ENCODE measurements at regions of chr2 and their contacts with region 1.

Region 1: GRCh38 chr2:24075915-24076848 is at the start of gene SF3B6:
- DNase-seq: peak; percentile 100
- ATAC-seq: peak; percentile 85
- H3K4me3 ChIP-seq: peak within 1 kb of the TSS; percentile 83 to 99 (median 96)
- H3K4me3 Mint-ChIP-seq: peak within 1 kb of the TSS; percentile 98
- H3K27ac ChIP-seq: peak within 1 kb of the TSS; percentile 84 to 87
- H3K27ac Mint-ChIP-seq: peak within 1 kb of the TSS; percentile 99
- H3K4me1 ChIP-seq: peaks cover 15 to 18% of the 10 kb centered on the region in 2 donors
- H3K4me1 Mint-ChIP-seq: peaks cover 33% of the 10 kb centered on the region
- H3K27me3 ChIP-seq: no peaks in the 10 kb centered on the region
- H3K27me3 Mint-ChIP-seq: no peaks in the 10 kb centered on the region
- CTCF ChIP-seq: no peak
- total RNA-seq, gene SF3B6: 45.0 and 47.2 TPM in 2 replicates

Region 2: GRCh38 chr2:23384551-23385349 is 691.4 kb before region 1 on chr2 and contains the start of gene KLHL29:
- CTCF ChIA-PET with region 1: no interaction called
- POLR2A ChIA-PET with region 1: no interaction called
- intact Hi-C with region 1: loop called (anchors 10 kb)
- DNase-seq: peak; percentile 79
- ATAC-seq: peak; percentile 87
- H3K4me3 ChIP-seq: peak within 1 kb of the TSS in 4 of 5 experiments; percentile 37 to 63 (median 56)
- H3K4me3 Mint-ChIP-seq: peak within 1 kb of the TSS; percentile 92
- H3K27ac ChIP-seq: no peak within 1 kb of the TSS
- H3K27ac Mint-ChIP-seq: peak within 1 kb of the TSS; percentile 68
- H3K4me1 ChIP-seq: peaks cover 29 to 34% of the 10 kb centered on the region in 2 donors
- H3K4me1 Mint-ChIP-seq: peaks cover 30% of the 10 kb centered on the region
- H3K27me3 ChIP-seq: peaks cover 0 to 41% (median 24%) of the 10 kb centered on the region in 4 experiments
- H3K27me3 Mint-ChIP-seq: peaks cover 36% of the 10 kb centered on the region
- CTCF ChIP-seq: no peak
- total RNA-seq, gene KLHL29: 3.4 and 3.9 TPM in 2 replicates

Region 3: DNA sequence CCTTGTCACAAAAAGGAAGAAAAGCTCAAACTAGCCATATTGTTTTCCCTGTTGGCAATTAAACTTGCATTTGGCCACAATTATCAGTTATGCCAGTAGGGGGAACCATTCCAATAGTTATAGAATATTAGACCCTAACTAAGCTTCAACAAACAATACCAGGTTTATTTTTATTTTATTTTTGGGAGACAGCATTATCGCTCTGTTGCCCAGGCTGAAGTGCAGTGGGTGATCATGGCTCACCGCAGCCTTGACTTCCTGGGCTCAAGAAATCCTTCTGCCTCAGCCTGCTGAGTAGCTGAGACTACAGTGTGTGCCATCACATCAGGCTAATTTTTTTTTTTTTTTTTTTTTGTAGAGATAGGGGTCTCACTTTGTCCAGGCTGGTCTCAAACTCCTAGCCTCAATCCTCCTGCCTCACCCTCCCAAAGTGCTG is 251.4 kb before region 1 on chr2:
- CTCF ChIA-PET with region 1: interaction called, 154 read pairs
- POLR2A ChIA-PET with region 1: no interaction called
- intact Hi-C with region 1: no loop called
- DNase-seq: peak; percentile 76
- ATAC-seq: peak; percentile 41
- H3K4me3 ChIP-seq: no peak overlapping the region
- H3K4me3 Mint-ChIP-seq: no peak overlapping the region
- H3K27ac ChIP-seq: no peak overlapping the region
- H3K27ac Mint-ChIP-seq: no peak overlapping the region
- H3K4me1 ChIP-seq: no peaks in the 10 kb centered on the region
- H3K4me1 Mint-ChIP-seq: no peaks in the 10 kb centered on the region
- H3K27me3 ChIP-seq: no peaks in the 10 kb centered on the region
- H3K27me3 Mint-ChIP-seq: no peaks in the 10 kb centered on the region
- CTCF ChIP-seq: peak; percentile 91

Region 4: DNA sequence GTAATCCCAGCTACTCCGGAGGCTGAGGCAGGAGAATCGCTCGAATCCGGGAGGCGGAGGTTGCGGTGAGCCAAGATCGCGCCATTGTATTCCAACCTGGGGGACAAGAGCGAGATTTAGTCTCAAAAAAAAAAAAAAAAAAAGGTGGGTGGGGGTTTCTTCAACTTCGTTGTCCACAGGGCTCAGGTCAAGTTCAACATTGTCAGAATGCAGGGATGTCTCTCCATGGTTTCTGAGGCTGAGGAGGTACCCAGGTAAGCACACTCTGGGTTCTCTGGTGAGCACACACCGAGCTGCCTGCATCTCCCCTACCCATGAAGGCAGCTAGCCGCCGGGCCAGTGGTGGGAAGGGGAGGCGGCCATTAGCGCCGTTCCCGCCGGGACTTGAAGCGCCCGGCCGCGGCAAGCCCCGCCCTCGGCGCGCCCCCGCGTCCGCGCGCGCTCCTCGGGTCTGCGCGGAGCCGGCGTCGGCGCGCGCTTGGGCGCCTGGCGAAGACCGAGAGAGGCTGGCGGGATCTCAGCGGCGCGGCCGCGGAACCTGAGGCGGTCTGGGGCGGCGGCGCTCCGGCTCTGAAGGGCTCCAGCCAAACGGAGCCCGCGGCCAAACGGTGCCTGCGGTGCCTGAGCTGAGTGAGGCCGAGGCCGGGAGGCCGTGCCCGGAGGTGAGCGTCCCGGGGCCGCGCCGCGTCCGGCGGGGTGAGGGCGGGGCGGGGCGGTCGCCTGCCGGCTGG is 136.0 kb before region 1 on chr2 and contains the start of gene UBXN2A:
- CTCF ChIA-PET with region 1: no interaction called
- POLR2A ChIA-PET with region 1: interaction called, 5 read pairs
- intact Hi-C with region 1: loop called (anchors 1 kb)
- DNase-seq: peak; percentile 91
- ATAC-seq: peak; percentile 84
- H3K4me3 ChIP-seq: peak within 1 kb of the TSS; percentile 65 to 91 (median 80)
- H3K4me3 Mint-ChIP-seq: peak within 1 kb of the TSS; percentile 91
- H3K27ac ChIP-seq: peak within 1 kb of the TSS; percentile 36 to 72
- H3K27ac Mint-ChIP-seq: peak within 1 kb of the TSS; percentile 85
- H3K4me1 ChIP-seq: peaks cover 12 to 18% of the 10 kb centered on the region in 2 donors
- H3K4me1 Mint-ChIP-seq: peaks cover 21% of the 10 kb centered on the region
- H3K27me3 ChIP-seq: no peaks in the 10 kb centered on the region
- H3K27me3 Mint-ChIP-seq: no peaks in the 10 kb centered on the region
- CTCF ChIP-seq: no peak
- total RNA-seq, gene UBXN2A: 13.4 and 14.2 TPM in 2 replicates

Region 5: GRCh38 chr2:24040531-24040930 is 35.7 kb before region 1 on chr2:
- CTCF ChIA-PET with region 1: no interaction called
- POLR2A ChIA-PET with region 1: interaction called, 10 read pairs
- intact Hi-C with region 1: no loop called
- DNase-seq: no peak
- ATAC-seq: no peak
- H3K4me3 ChIP-seq: no peak overlapping the region
- H3K4me3 Mint-ChIP-seq: no peak overlapping the region
- H3K27ac ChIP-seq: no peak overlapping the region
- H3K27ac Mint-ChIP-seq: no peak overlapping the region
- H3K4me1 ChIP-seq: no peaks in the 10 kb centered on the region
- H3K4me1 Mint-ChIP-seq: peaks cover 10% of the 10 kb centered on the region
- H3K27me3 ChIP-seq: no peaks in the 10 kb centered on the region
- H3K27me3 Mint-ChIP-seq: no peaks in the 10 kb centered on the region
- CTCF ChIP-seq: no peak

Region 6: DNA sequence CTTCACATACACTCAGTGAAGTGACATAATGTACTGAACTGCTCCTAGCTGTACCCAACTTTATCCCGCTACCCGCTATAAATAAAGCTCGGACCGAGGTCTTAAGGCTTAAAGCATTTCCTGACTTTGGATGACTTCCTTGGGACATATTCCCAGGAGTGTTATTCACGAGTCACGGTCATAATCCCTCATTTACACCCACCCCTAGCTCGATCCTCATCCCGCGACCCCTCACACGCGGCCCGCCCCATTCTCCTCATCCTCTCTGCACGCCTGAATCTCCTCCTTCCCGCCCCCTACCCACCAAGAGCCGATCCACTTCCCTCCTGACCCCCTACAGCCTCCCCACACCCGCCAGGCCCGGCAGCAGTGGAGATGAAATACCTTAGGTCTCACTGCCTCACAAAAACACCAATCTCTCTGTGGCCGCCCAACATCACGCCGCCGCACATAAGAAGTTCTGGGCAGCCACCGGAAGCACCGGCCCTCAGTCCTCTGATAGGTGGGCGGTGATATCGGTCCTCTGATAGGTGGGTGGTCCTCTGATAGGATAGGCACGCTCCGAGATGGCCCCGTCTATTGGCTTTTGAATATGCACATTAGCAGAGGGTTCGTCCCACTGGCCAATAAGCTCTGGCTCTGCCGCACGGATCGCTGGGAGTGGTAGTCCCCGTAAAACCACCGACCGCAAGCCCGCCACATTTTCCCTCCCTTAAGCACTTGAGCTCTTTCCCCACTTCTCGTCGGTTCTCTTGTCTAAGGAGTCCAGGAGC is 29.1 kb before region 1 on chr2 and contains the start of gene WDCP:
- CTCF ChIA-PET with region 1: interaction called, 7 read pairs
- POLR2A ChIA-PET with region 1: interaction called, 16 read pairs
- intact Hi-C with region 1: loop called (anchors 1 kb)
- DNase-seq: peak; percentile 95
- ATAC-seq: peak; percentile 99
- H3K4me3 ChIP-seq: peak within 1 kb of the TSS; percentile 53 to 92 (median 79)
- H3K4me3 Mint-ChIP-seq: peak within 1 kb of the TSS; percentile 90
- H3K27ac ChIP-seq: peak within 1 kb of the TSS in 1 of 2 donors; percentile 79
- H3K27ac Mint-ChIP-seq: peak within 1 kb of the TSS; percentile 86
- H3K4me1 ChIP-seq: peaks cover 24 to 26% of the 10 kb centered on the region in 2 donors
- H3K4me1 Mint-ChIP-seq: peaks cover 25% of the 10 kb centered on the region
- H3K27me3 ChIP-seq: peaks cover 0 to 20% (median 2%) of the 10 kb centered on the region in 4 experiments
- H3K27me3 Mint-ChIP-seq: no peaks in the 10 kb centered on the region
- CTCF ChIP-seq: no peak
- total RNA-seq, gene WDCP: 21.6 and 22.3 TPM in 2 replicates

Region 7: DNA sequence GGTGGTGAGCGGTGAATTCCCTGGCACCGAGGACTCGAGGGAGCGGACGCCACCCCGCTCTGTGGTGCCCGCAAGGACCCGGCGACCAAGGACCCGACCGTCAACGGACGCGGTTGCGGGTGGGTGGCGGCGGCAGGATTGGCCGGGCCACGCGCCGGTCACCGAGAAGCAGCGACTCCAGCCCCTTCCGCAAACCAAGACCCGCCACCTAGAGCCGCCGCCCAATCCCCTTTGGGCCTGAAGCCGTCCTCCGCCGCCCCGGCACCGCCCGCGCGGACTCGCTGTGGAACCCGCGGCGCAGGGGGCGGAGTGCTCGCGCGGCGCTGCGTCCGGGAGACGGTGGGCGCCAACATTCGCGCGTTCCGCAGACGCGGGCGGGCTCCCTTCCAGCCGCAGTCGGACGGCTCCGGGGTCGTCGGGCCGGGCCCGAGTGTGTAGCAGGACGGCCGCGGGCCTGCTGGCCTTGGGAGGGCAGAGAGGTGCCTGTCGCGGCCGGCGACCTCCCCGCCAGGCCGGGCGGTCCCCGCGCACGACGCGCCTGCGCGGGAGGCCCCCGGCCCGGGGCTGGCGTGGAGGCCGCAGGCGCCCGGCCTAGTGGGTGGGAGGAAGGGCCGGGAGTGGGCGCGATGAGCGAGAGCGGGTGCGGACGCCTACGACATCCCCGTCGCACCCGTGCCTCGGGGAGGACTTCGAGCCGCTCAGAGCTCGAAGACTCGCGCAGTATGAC is 47.2 kb after region 1 on chr2 and contains the starts of genes FAM228B and PFN4:
- CTCF ChIA-PET with region 1: interaction called, 4 read pairs
- POLR2A ChIA-PET with region 1: interaction called, 11 read pairs
- intact Hi-C with region 1: loop called (anchors 1 kb)
- DNase-seq: peak; percentile 87
- ATAC-seq: peak; percentile 94
- H3K4me3 ChIP-seq: peak within 1 kb of the TSS; percentile 62 to 80 (median 73)
- H3K4me3 Mint-ChIP-seq: peak within 1 kb of the TSS; percentile 90
- H3K27ac ChIP-seq: peak within 1 kb of the TSS; percentile 70 to 80
- H3K27ac Mint-ChIP-seq: peak within 1 kb of the TSS; percentile 95
- H3K4me1 ChIP-seq: peaks cover 5 to 18% of the 10 kb centered on the region in 2 donors
- H3K4me1 Mint-ChIP-seq: peaks cover 20% of the 10 kb centered on the region
- H3K27me3 ChIP-seq: no peaks in the 10 kb centered on the region
- H3K27me3 Mint-ChIP-seq: no peaks in the 10 kb centered on the region
- CTCF ChIP-seq: no peak
- total RNA-seq, gene FAM228B: 47.2 and 49.6 TPM in 2 replicates
- total RNA-seq, gene PFN4: 0.39 and 0.66 TPM in 2 replicates

Measured in B cell (primary cell).